ENCODE measurements at regions of chr12 and their contacts with region 1.

Region 1: DNA sequence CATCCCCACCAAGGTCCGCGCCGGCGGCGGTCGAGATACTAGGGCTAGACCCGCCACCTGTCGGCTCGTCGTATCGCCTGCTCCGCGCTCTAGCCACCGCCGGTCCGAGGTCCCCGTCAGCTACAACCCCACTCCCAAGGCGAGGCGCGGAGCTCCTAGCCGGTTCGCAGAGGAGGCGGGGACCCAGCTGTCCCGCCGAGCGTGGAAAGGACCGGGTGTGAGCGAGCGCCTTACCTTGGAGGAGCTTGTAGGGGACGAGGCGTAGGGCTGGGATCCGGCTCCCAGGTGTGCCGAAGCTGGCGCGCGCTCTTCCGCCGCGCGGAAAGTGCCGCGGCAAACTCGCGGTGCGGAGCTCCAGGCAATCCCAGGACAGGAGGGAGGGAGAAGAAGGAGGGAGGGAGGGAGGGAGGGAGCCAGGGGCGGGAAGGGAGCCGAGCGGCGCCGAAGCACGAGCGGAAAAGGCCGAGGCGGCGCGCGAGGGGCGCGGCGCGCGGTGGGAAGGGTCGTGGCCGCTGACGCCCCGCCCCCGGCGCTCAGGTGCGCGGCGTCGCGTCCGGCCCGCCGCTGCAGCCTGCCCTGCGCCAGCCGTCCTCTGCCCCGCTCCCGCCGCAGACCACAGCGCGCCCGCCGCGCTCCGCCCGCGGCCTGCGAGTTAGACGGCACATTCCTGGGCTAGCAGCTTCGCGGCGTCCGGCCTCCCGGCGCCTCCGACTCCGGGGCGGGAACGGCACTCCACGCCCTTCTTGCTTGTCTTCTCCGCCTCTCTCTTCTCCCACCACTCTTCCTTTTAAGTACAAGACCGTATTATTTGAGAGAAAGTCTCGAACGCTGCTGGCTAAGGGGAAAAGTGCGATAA is at the start of gene PAWR:
- DNase-seq: peak; percentile 69
- ATAC-seq: peak; percentile 86
- H3K4me3 ChIP-seq: peak within 1 kb of the TSS; percentile 73 to 91
- H3K27ac ChIP-seq: peak within 1 kb of the TSS; percentile 98
- H3K4me1 ChIP-seq: peaks cover 27% of the 10 kb centered on the region
- H3K27me3 ChIP-seq: no peaks in the 10 kb centered on the region
- CTCF ChIP-seq: peak; percentile 54
- total RNA-seq, gene PAWR: 142 TPM

Region 2: DNA sequence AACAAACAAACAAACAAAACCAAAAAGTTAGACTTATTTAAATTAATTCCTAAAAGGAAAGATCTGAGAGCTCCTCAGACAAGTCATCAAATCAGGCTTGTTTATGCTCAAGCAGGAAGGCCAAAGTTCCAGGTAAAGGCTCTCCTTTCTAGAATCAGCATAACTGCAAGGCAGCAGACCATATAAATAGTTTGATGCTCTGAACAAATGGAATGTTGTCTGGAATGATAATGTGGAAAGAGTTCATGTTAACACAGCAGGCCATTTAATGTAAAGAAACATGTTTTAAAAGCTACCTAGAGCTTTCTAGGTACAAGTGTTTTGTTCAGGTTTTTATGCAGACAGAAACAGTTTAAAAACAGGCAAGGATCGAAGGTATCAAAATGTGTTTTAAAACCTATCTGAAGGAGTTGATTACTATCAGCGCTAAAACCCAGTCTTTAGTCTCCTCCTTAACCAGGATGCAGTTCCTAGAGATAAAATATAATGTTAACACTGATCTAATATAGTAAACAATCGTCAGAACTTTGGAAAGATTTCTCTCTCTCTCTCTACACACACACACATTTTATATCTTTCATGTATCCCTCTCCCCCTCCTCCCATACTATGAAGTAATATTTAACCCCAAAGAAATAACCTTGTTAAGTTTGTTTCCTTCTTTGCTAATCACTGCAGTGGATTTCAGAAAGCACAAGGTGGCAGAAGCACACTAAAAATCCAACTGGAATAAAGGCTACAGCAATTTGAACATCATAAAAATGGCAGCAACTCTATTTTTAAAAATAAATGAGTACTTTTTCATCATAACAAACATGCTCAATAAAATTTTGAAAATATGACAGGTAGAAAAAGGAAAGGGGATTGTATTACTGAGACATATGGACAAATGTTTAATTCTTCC is 135.6 kb before region 1 on chr12:
- CTCF ChIA-PET with region 1: no interaction called
- POLR2A ChIA-PET with region 1: no interaction called
- in situ Hi-C with region 1: no loop called
- intact Hi-C with region 1: loop called (anchors 5 kb)
- DNase-seq: no peak
- ATAC-seq: no peak
- H3K4me3 ChIP-seq: no peak overlapping the region
- H3K27ac ChIP-seq: peak overlapping the region; percentile 55; the same call in 1 of the 2 replicates
- H3K4me1 ChIP-seq: peaks cover 15% of the 10 kb centered on the region
- H3K27me3 ChIP-seq: no peaks in the 10 kb centered on the region
- CTCF ChIP-seq: peak; percentile 62; the same call in 1 of the 2 replicates

Region 3: DNA sequence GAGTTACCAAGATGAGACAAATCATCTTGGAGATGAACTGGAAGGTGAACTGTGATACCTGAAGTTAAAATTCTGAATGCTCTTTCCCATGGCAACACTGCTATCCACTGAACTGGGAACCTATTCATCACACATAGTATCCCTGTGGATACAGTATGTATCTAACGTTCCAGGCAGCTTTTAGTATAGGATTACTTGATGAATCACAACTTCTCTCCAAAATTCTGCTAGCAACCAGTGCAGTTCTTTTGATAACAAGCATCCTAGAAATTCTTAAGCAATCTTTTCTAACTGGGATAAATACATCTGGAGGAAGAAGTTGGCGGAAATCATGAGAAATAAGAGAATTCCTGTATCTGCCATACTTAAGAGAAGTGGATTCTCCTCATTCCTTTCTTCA is 66.5 kb before region 1 on chr12:
- CTCF ChIA-PET with region 1: interaction called, 3 read pairs
- POLR2A ChIA-PET with region 1: interaction called, 3 read pairs
- in situ Hi-C with region 1: no loop called
- intact Hi-C with region 1: loop called (anchors 10 kb)
- DNase-seq: no peak
- ATAC-seq: no peak
- H3K4me3 ChIP-seq: no peak overlapping the region
- H3K27ac ChIP-seq: no peak overlapping the region
- H3K4me1 ChIP-seq: no peaks in the 10 kb centered on the region; the same call in 1 of the 2 replicates
- H3K27me3 ChIP-seq: no peaks in the 10 kb centered on the region
- CTCF ChIP-seq: no peak

Region 4: DNA sequence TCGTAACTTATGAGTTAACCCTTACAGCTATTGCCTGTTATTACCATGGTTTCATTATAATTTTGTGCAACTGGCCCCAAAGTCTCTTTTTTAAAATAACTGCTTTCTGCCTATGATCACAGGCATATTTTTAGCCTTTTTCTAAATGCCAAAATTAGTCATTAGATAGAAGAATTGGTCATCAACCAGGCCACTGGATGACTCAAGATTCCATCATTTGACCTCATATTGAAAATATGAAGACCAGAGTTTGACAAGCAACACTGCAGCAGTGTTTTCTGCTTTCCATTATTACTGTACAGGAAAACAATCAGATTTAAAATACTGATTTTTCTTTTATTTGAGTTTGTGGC is 353.8 kb after region 1 on chr12:
- CTCF ChIA-PET with region 1: no interaction called
- POLR2A ChIA-PET with region 1: no interaction called
- in situ Hi-C with region 1: no loop called
- intact Hi-C with region 1: no loop called
- DNase-seq: no peak
- ATAC-seq: no peak
- H3K4me3 ChIP-seq: no peak overlapping the region
- H3K27ac ChIP-seq: no peak overlapping the region
- H3K4me1 ChIP-seq: no peaks in the 10 kb centered on the region
- H3K27me3 ChIP-seq: no peaks in the 10 kb centered on the region
- CTCF ChIP-seq: no peak